Motor neuron (in vitro differentiated cells): ENCODE measurements at regions of chr18 and their contacts with region 1.

Region 1: GRCh38 chr18:75036917-75037688 is 171.8 kb downstream of the PTGR3 start:
- ATAC-seq: peak in 6 of 8 experiments; percentile 39 to 67 (median 54)
- H3K4me3 ChIP-seq: no peak overlapping the region
- H3K27ac ChIP-seq: no peak overlapping the region
- H3K4me1 ChIP-seq: peaks cover 7 to 32% of the 10 kb centered on the region in 2 donors

Region 2: GRCh38 chr18:74489676-74490075 is 547.4 kb before region 1 on chr18:
- in situ Hi-C with region 1: no loop called
- ATAC-seq: peak in 2 of 8 experiments; percentile 36 to 53
- H3K4me3 ChIP-seq: no peak overlapping the region
- H3K27ac ChIP-seq: no peak overlapping the region
- H3K4me1 ChIP-seq: peaks cover 0 to 14% of the 10 kb centered on the region in 2 donors

Region 3: GRCh38 chr18:74976331-74976909 is 60.7 kb before region 1 on chr18:
- in situ Hi-C with region 1: loop called in 1 of 9 experiments (anchors 10 kb)
- ATAC-seq: no peak
- H3K4me3 ChIP-seq: no peak overlapping the region
- H3K27ac ChIP-seq: no peak overlapping the region
- H3K4me1 ChIP-seq: peaks cover 0 to 12% of the 10 kb centered on the region in 2 donors